ENCODE measurements at regions of chr12 and their contacts with region 1.

Region 1: DNA sequence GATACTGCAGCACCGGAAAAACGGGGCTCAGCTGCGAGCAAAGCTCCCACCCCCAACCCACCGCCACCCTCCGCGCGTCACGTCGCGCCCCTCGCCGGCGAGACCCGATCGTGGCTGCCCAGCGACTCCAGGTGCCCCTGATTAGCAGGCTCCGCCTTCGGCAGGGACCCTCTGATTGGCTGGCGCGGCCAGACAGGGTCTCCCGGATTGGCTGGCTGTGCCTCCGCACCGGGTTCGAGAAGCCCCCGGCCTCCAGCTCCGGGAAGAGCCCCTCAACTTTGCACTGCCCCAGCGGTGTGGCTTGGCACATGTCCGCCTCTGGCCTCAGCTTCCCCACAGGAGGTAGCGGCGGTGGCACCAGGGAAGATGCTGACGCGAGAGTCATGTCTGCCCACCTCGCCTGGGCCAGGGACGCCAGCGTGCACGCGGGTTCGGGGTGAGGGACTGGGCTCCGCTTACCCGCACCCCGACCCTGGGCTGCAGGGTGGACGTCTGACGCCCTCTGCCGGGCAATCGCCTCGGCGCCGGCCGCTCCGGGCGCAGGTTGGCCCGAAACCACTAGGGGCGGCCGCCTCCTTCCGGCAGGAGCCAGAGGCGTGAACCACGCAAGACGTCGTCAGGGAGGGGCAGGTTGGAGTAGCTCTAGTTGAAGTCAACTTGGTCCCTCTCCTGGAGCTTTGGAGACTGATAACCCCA is 498 bp upstream of the RHOF start:
- DNase-seq: peak; percentile 72 to 96
- H3K4me3 ChIP-seq: peak overlapping the region; percentile 57 to 67
- H3K27ac ChIP-seq: peak overlapping the region; percentile 100
- H3K4me1 ChIP-seq: peaks cover 30 to 42% of the 10 kb centered on the region in 2 donors
- H3K27me3 ChIP-seq: no peaks in the 10 kb centered on the region
- CTCF ChIP-seq: peak; percentile 100

Region 2: DNA sequence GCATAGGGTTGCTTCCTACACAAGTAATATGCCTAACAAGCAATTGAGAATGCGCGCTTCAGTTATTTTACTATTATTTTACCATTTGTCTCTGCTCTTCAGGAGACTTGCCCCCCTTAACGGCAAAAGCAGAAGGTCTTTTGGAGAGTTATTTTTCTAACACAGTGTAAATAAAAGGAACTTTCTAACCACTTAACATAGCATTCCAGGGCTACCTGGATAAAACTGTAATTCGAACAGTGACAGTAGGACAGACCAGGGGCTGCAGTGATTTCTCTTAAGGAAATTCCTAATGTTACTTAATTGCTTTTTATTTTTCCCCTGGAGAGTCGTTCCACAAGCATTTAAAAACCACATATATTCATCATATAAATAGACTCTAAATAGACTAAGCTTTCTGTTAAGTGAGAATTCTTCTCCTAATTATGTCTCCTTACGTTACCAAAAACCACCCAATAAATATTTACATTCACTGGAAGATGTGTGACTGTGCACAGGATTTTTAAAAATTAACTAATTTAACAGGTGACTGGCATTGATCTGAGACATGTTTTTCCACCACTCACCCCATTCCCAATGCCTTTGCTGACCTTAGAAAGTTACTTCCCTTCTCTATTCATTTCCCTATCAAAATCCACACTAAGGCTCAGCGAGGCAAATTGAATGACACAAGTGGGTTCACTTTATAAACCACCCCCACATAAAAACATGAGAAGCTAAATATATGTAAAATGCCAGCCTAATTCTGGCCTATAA is 321.7 kb before region 1 on chr12:
- intact Hi-C with region 1: no loop called
- DNase-seq: no peak
- H3K4me3 ChIP-seq: no peak overlapping the region
- H3K27ac ChIP-seq: no peak overlapping the region
- H3K4me1 ChIP-seq: peaks cover 0 to 2% of the 10 kb centered on the region in 2 donors
- H3K27me3 ChIP-seq: no peaks in the 10 kb centered on the region
- CTCF ChIP-seq: no peak

Region 3: GRCh38 chr12:121697098-121697698 is 96.8 kb before region 1 on chr12:
- intact Hi-C with region 1: loop called (anchors 1 kb)
- DNase-seq: no peak
- H3K4me3 ChIP-seq: no peak overlapping the region
- H3K27ac ChIP-seq: no peak overlapping the region
- H3K4me1 ChIP-seq: peaks cover 0 to 9% of the 10 kb centered on the region in 2 donors
- H3K27me3 ChIP-seq: no peaks in the 10 kb centered on the region
- CTCF ChIP-seq: peak; percentile 32 to 70 (median 55)

Region 4: GRCh38 chr12:121811434-121812319 is 17.7 kb after region 1 on chr12:
- intact Hi-C with region 1: loop called (anchors 1 kb)
- DNase-seq: peak in 1 of 2 donors; percentile 68
- H3K4me3 ChIP-seq: peak overlapping the region; percentile 63 to 69
- H3K27ac ChIP-seq: peak overlapping the region; percentile 66 to 80
- H3K4me1 ChIP-seq: peaks cover 24 to 40% of the 10 kb centered on the region in 2 donors
- H3K27me3 ChIP-seq: no peaks in the 10 kb centered on the region
- CTCF ChIP-seq: peak; percentile 93 to 99 (median 99)

Region 5: DNA sequence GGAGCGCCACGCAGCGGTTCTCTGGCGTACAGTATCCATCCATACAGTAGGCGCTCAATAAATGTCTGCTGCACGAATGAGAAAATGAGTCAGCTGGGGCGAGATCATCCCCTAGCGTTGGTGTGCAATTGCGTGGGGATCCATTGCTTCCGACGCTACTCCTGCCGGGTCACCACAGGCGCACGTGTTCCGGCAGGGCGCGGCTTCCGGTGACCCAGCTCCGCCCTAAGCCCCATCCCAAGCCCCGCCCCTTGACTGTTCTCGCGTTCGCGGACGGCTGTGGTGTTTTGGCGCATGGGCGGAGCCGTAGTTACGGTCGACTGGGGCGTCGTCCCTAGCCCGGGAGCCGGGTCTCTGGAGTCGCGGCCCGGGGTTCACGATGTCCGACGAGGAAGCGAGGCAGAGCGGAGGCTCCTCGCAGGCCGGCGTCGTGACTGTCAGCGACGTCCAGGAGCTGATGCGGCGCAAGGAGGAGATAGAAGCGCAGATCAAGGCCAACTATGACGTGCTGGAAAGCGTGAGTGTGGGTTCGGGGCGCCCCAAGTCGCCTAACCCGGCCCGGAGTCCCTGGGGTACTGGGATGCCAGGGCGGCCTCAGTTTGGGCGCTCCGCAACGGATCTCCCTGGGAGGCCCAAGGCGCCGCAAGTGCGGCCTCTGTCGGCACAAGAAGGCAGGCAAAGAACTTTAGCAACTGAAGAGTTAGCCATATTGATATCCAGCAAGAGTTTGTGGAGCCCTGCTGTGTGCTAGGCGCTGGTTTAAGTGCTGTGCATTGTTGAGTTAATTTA is 94.7 kb after region 1 on chr12 and contains the start of gene PSMD9:
- intact Hi-C with region 1: loop called (anchors 1 kb)
- DNase-seq: peak; percentile 84 to 98
- H3K4me3 ChIP-seq: peak within 1 kb of the TSS; percentile 74 to 79
- H3K27ac ChIP-seq: peak within 1 kb of the TSS; percentile 94 to 97
- H3K4me1 ChIP-seq: peaks cover 5 to 23% of the 10 kb centered on the region in 2 donors
- H3K27me3 ChIP-seq: no peaks in the 10 kb centered on the region
- CTCF ChIP-seq: peak; percentile 78 to 81 (median 78)
- total RNA-seq, gene PSMD9: 49.8 TPM